Activated CD4-positive, alpha-beta T cell treated with anti-CD3 and anti-CD28 coated beads, Interleukin-2, amount 10 ng/mL, durations not matched to agents 24 days and 14 days (primary cell): ENCODE measurements at regions of chr1 and their contacts with region 1.

Region 1: DNA sequence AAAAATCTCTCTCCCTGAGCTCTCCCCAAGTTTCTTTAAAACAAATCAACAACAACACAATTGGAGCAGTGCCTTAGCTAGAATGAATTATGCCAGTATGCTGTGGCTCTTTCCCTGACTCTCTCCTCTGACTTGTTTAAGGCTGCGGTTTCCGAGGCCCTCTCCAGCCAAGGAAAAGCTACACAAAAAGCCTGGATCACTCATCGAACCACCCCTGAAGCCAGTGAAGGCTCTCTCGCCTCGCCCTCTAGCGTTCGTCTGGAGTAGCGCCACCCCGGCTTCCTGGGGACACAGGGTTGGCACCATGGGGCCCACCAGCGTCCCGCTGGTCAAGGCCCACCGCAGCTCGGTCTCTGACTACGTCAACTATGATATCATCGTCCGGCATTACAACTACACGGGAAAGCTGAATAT is 1.9 kb downstream of the S1PR1 start:
- DNase-seq: peak; percentile 96
- H3K4me3 Mint-ChIP-seq: peak overlapping the region; percentile 90
- H3K27ac Mint-ChIP-seq: peak overlapping the region; percentile 96
- H3K4me1 Mint-ChIP-seq: peaks cover 52% of the 10 kb centered on the region
- H3K27me3 Mint-ChIP-seq: no peaks in the 10 kb centered on the region

Region 2: DNA sequence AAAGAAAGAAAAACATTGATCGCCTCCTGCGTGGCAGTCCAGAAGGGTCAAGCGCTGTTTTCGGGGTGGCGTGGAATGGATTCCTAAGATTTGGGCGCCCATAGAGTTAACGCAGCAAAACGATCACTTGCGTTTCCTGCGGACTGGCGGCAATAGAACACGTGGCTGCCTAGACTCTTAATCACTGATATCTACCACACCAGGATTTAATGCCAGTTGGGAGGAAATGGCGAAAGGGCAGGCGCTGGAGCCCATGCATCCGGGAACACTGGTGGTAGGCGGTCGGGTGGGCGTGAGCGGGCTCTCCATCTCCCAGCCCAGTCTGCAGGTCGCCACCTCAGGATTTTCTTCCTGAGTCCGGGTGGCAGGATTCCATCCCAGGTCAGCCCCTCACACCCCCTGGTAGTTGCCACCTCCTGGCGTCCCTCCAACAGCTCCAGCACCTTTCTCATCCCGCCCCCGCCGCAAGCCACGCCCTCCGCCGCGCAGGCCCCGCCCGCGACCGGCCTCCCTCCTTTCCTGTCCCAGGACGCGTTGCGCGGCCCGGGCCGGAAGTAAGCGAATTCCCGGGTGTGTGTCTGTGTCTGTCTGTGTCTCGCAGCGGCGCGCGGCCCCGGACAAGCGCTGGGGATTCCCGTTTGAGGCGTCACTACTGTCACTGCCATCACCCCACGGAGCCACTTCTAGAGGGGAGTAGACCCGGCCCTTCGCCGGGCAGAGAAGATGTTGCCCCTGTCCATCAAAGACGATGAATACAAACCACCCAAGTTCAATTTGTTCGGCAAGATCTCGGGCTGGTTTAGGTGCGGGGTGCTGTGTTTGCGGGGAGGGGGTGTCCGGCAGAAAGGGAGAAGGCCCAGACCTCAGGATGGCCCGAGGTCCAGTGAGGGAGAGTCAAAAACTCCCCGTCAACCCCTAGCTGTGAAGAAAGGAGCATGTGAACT is 342.9 kb before region 1 on chr1 and contains the start of gene SLC30A7:
- intact Hi-C with region 1: loop called (anchors 1 kb)
- DNase-seq: peak; percentile 99
- H3K4me3 Mint-ChIP-seq: peak within 1 kb of the TSS; percentile 100
- H3K27ac Mint-ChIP-seq: peak within 1 kb of the TSS; percentile 100
- H3K4me1 Mint-ChIP-seq: peaks cover 36% of the 10 kb centered on the region
- H3K27me3 Mint-ChIP-seq: no peaks in the 10 kb centered on the region
- total RNA-seq, gene SLC30A7: 40.8 and 41.0 TPM in 2 replicates

Region 3: DNA sequence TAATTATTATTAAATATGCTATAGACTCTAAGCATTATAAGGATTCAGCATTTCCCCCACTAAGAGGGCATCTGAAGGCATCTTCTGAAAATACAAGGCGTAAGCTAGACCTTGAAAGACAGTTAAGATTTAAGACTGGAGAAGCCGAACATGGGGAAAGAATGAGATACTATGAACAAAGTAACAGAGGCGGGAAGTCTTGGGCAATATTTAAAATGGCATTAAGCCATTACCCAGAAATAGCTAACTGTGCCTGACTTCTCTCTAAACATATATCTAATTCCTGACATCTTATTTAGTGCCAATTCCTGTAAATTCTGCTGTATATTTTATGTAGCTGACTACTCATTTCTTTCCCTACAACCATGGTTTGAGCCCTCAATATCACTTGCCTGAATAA is 234.0 kb before region 1 on chr1:
- intact Hi-C with region 1: loop called (anchors 5 kb)
- DNase-seq: no peak
- H3K4me3 Mint-ChIP-seq: no peak overlapping the region
- H3K27ac Mint-ChIP-seq: no peak overlapping the region
- H3K4me1 Mint-ChIP-seq: peaks cover 33% of the 10 kb centered on the region
- H3K27me3 Mint-ChIP-seq: no peaks in the 10 kb centered on the region

Region 4: GRCh38 chr1:101081496-101082488 is 156.9 kb before region 1 on chr1:
- intact Hi-C with region 1: loop called (anchors 1 kb)
- DNase-seq: peak; percentile 88
- H3K4me3 Mint-ChIP-seq: peak overlapping the region; percentile 44
- H3K27ac Mint-ChIP-seq: peak overlapping the region; percentile 76
- H3K4me1 Mint-ChIP-seq: peaks cover 38% of the 10 kb centered on the region
- H3K27me3 Mint-ChIP-seq: no peaks in the 10 kb centered on the region

Region 5: GRCh38 chr1:101203820-101204540 is 34.7 kb before region 1 on chr1:
- intact Hi-C with region 1: loop called (anchors 1 kb)
- DNase-seq: no peak
- H3K4me3 Mint-ChIP-seq: no peak overlapping the region
- H3K27ac Mint-ChIP-seq: no peak overlapping the region
- H3K4me1 Mint-ChIP-seq: peaks cover 25% of the 10 kb centered on the region
- H3K27me3 Mint-ChIP-seq: no peaks in the 10 kb centered on the region

Region 6: DNA sequence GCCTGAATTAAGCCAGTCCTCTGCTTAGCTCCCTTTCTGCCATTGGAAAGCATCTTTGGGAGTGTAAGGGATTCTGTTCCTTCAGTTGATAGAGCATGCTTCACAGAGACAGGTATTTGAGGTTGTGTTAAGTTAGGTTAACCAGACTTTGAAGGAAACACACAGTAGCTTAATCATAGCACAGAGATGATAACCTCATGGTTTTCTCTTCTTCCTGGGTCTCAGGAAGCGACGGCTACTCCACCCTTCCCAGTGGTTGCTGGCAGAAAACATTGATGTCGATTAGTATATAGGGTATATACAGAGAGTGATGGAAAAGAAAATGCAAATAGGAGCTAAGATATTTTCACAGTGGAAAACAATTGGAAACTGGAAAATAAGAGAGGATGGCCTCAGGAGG is 40.2 kb after region 1 on chr1:
- intact Hi-C with region 1: loop called (anchors 2 kb)
- DNase-seq: peak; percentile 75
- H3K4me3 Mint-ChIP-seq: peak overlapping the region; percentile 58
- H3K27ac Mint-ChIP-seq: peak overlapping the region; percentile 54
- H3K4me1 Mint-ChIP-seq: peaks cover 58% of the 10 kb centered on the region
- H3K27me3 Mint-ChIP-seq: no peaks in the 10 kb centered on the region